ENCODE measurements at regions of chr19 and their contacts with region 1.

Region 1: DNA sequence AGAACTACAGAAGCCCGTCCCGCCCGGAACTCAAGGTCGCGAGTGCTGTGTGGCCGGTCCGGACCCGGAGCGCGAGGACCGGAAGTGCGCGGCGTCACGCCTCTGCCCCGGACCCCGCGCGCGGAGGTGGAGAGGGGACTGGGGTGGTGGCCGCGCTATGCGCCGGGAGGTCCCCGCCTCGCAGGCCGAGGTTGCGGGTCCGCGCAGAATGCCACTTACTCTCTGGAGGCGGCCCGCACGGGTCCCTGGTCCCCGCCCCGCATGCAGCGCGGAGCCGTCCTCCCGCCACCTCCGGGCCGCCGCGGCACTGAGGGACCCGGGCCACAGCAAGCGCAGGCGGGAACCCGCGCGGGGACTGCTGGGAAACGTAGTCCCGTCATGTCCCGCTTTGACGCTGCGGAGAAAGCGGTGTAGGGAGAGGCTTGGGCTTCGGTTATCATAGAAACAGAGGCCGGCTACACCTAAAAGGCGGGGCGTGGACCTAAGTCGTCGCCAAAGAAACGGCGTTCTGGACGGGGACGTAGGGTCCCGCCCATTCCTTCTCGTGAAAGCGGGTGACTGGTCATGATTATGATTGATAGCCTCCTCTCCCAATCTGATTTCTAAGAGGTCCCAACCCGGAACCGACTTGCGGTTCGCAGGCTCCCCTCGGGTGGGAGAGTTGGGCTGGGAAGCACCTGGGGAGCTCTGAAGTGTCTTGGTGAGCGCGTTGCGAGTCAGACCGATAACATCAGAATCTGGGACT is at the start of gene ZNF837:
- DNase-seq: peak; percentile 97 to 100 (median 99)
- H3K4me3 ChIP-seq: peak within 1 kb of the TSS; percentile 61 to 85
- H3K4me3 Mint-ChIP-seq: peak within 1 kb of the TSS; percentile 91 to 97 (median 95)
- H3K27ac ChIP-seq: peak within 1 kb of the TSS; percentile 89
- H3K27ac Mint-ChIP-seq: peak within 1 kb of the TSS; percentile 84 to 98 (median 97)
- H3K4me1 ChIP-seq: peaks cover 26% of the 10 kb centered on the region
- H3K4me1 Mint-ChIP-seq: peaks cover 18 to 42% (median 26%) of the 10 kb centered on the region in 4 donors
- H3K27me3 ChIP-seq: no peaks in the 10 kb centered on the region
- H3K27me3 Mint-ChIP-seq: no peaks in the 10 kb centered on the region
- total RNA-seq, gene ZNF837: 3.4 to 3.5 TPM

Region 2: DNA sequence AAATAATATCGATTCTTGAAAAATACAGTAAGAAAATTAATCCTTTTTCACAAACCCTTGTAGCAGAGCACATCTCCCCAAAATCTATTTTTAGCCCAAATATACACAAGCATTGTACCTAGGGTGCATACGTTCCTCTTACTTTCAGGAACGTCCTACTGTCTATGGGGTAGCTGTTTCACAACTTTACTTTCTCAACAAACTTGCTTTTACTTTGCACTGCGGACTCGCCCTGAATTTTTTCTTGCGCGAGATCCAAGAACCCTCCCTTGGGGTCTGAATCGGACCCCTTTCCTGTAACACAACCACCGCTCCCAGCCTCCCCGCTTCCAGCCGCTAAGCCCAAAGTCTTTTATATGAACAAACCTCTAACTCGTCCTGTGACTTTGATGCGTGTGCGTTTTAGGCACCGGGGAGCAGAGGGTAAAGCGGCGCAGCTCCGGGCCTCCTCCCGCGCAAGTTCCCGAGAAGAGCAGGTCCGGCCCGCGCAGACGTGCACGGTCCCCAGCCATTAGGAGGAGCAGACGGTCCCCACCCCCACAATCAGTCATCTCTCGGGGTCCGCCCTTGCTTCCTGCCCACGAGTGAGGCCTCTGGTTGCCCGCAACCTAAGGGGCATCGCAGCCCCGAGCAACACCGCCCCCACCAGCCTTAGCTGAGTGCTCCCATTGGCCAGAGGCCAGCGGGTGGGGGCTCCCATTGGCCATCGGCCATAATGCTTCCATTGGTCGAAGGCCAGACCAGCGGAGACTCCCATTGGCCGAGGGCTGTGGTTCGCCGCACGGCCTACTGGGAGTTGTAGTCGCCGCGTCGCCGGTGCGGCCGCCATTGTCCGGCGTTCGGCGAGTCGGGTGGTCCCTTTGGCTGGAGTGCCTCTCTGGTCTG is 102.5 kb before region 1 on chr19 and contains the start of gene ZNF8:
- CTCF ChIA-PET with region 1: no interaction called
- POLR2A ChIA-PET with region 1: interaction called, 3 read pairs
- intact Hi-C with region 1: loop called (anchors 2 kb)
- DNase-seq: peak; percentile 93 to 97 (median 95)
- H3K4me3 ChIP-seq: peak within 1 kb of the TSS; percentile 62 to 92
- H3K4me3 Mint-ChIP-seq: peak within 1 kb of the TSS; percentile 93 to 100 (median 98)
- H3K27ac ChIP-seq: peak within 1 kb of the TSS; percentile 73
- H3K27ac Mint-ChIP-seq: peak within 1 kb of the TSS; percentile 91 to 99 (median 96)
- H3K4me1 ChIP-seq: peaks cover 36% of the 10 kb centered on the region
- H3K4me1 Mint-ChIP-seq: peaks cover 28 to 57% (median 36%) of the 10 kb centered on the region in 4 donors
- H3K27me3 ChIP-seq: no peaks in the 10 kb centered on the region
- H3K27me3 Mint-ChIP-seq: no peaks in the 10 kb centered on the region
- total RNA-seq, gene ZNF8: 9.5 to 10.2 TPM

Region 3: DNA sequence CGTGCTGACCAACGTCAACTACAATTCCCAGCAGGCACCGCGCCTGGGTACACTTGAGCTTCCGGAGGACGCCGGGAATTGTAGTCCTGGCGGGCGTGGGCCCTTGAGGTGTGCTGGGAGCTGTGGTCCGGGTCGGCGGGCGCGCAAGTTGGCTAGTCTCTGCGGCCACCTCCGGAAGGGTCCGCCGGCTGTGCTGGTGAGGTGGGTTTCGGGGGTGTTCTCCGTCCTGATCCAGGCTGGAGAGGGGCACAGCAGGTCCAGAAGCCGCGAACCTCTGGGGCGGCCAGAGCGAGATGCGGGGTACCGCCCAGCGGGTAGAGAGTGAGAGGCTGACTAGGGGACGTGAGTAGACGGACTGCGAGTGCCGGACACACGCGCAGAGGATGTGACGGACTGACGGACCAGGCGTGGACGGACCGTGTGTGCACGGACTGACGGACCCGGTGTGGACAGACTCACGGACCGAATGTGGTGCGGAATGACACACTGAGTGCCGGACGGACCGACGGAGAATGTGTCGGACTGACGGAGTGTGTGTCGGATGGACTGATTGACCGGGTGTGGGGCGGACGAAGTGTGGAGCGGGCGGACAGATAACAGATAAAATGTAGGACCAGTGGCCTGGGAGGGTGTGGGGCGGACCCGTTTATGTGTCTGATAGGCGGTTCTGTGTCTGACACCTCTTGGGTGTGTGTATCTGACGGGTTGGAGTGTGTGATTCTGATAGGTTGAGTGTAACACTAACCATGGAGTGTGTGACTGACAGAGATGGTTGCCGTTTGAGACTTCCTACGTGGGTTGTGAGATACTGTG is 53.8 kb before region 1 on chr19 and contains the start of gene ZSCAN22:
- CTCF ChIA-PET with region 1: no interaction called
- POLR2A ChIA-PET with region 1: interaction called, 6 read pairs
- intact Hi-C with region 1: loop called (anchors 1 kb)
- DNase-seq: peak; percentile 80 to 89 (median 83)
- H3K4me3 ChIP-seq: peak within 1 kb of the TSS; percentile 32 to 77
- H3K4me3 Mint-ChIP-seq: no peak within 1 kb of the TSS
- H3K27ac ChIP-seq: peak within 1 kb of the TSS; percentile 80
- H3K27ac Mint-ChIP-seq: no peak within 1 kb of the TSS
- H3K4me1 ChIP-seq: peaks cover 25% of the 10 kb centered on the region
- H3K4me1 Mint-ChIP-seq: peaks cover 0 to 2% (median under 1%) of the 10 kb centered on the region in 4 donors
- H3K27me3 ChIP-seq: no peaks in the 10 kb centered on the region
- H3K27me3 Mint-ChIP-seq: no peaks in the 10 kb centered on the region
- total RNA-seq, gene ZSCAN22: 5.0 to 5.3 TPM

Region 4: GRCh38 chr19:58362272-58362994 is 18.5 kb before region 1 on chr19 and contains the start of gene ZNF497:
- CTCF ChIA-PET with region 1: interaction called, 4 read pairs
- POLR2A ChIA-PET with region 1: interaction called, 44 read pairs
- intact Hi-C with region 1: loop called (anchors 1 kb)
- DNase-seq: peak; percentile 95 to 96 (median 95)
- H3K4me3 ChIP-seq: peak within 1 kb of the TSS; percentile 90 to 98
- H3K4me3 Mint-ChIP-seq: peak within 1 kb of the TSS; percentile 90 to 98 (median 93)
- H3K27ac ChIP-seq: peak within 1 kb of the TSS; percentile 69
- H3K27ac Mint-ChIP-seq: peak within 1 kb of the TSS; percentile 79 to 98 (median 94)
- H3K4me1 ChIP-seq: peaks cover 11% of the 10 kb centered on the region
- H3K4me1 Mint-ChIP-seq: peaks cover 6 to 13% (median 9%) of the 10 kb centered on the region in 4 donors
- H3K27me3 ChIP-seq: no peaks in the 10 kb centered on the region
- H3K27me3 Mint-ChIP-seq: no peaks in the 10 kb centered on the region
- total RNA-seq, gene ZNF497: 1.7 to 2.0 TPM

Region 5: GRCh38 chr19:58408152-58409009 is 27.5 kb after region 1 on chr19 and contains the start of gene ZNF584:
- CTCF ChIA-PET with region 1: no interaction called
- POLR2A ChIA-PET with region 1: interaction called, 7 read pairs
- intact Hi-C with region 1: loop called (anchors 1 kb)
- DNase-seq: peak; percentile 93 to 94 (median 93)
- H3K4me3 ChIP-seq: peak within 1 kb of the TSS; percentile 71 to 94
- H3K4me3 Mint-ChIP-seq: peak within 1 kb of the TSS; percentile 92 to 100 (median 96)
- H3K27ac ChIP-seq: peak within 1 kb of the TSS; percentile 77
- H3K27ac Mint-ChIP-seq: peak within 1 kb of the TSS; percentile 91 to 98 (median 95)
- H3K4me1 ChIP-seq: peaks cover 25% of the 10 kb centered on the region
- H3K4me1 Mint-ChIP-seq: peaks cover 21 to 39% (median 33%) of the 10 kb centered on the region in 4 donors
- H3K27me3 ChIP-seq: no peaks in the 10 kb centered on the region
- H3K27me3 Mint-ChIP-seq: no peaks in the 10 kb centered on the region
- total RNA-seq, gene ZNF584: 10.3 to 10.7 TPM

Region 6: GRCh38 chr19:58451358-58452101 is 70.6 kb after region 1 on chr19 and contains the start of gene ZNF324B:
- CTCF ChIA-PET with region 1: no interaction called
- POLR2A ChIA-PET with region 1: interaction called, 4 read pairs
- intact Hi-C with region 1: loop called (anchors 1 kb)
- DNase-seq: peak; percentile 96 to 97 (median 96)
- H3K4me3 ChIP-seq: peak within 1 kb of the TSS; percentile 60 to 69
- H3K4me3 Mint-ChIP-seq: peak within 1 kb of the TSS; percentile 85 to 93 (median 88)
- H3K27ac ChIP-seq: peak within 1 kb of the TSS; percentile 67
- H3K27ac Mint-ChIP-seq: peak within 1 kb of the TSS; percentile 67 to 93 (median 84)
- H3K4me1 ChIP-seq: peaks cover 7% of the 10 kb centered on the region
- H3K4me1 Mint-ChIP-seq: peaks cover 13 to 31% (median 19%) of the 10 kb centered on the region in 4 donors
- H3K27me3 ChIP-seq: no peaks in the 10 kb centered on the region
- H3K27me3 Mint-ChIP-seq: peaks cover 6 to 11% of the 10 kb centered on the region in 2 donors
- total RNA-seq, gene ZNF324B: 13.1 to 13.7 TPM

Region 7: GRCh38 chr19:58475714-58476497 is 95.0 kb after region 1 on chr19 and contains the start of gene ZNF446:
- CTCF ChIA-PET with region 1: no interaction called
- POLR2A ChIA-PET with region 1: interaction called, 5 read pairs
- intact Hi-C with region 1: loop called (anchors 1 kb)
- DNase-seq: peak; percentile 96 to 99 (median 97)
- H3K4me3 ChIP-seq: peak within 1 kb of the TSS; percentile 69 to 94
- H3K4me3 Mint-ChIP-seq: peak within 1 kb of the TSS; percentile 91 to 98 (median 96)
- H3K27ac ChIP-seq: peak within 1 kb of the TSS; percentile 90
- H3K27ac Mint-ChIP-seq: peak within 1 kb of the TSS; percentile 97 to 100 (median 99)
- H3K4me1 ChIP-seq: peaks cover 17% of the 10 kb centered on the region
- H3K4me1 Mint-ChIP-seq: peaks cover 9 to 33% (median 19%) of the 10 kb centered on the region in 4 donors
- H3K27me3 ChIP-seq: no peaks in the 10 kb centered on the region
- H3K27me3 Mint-ChIP-seq: no peaks in the 10 kb centered on the region
- total RNA-seq, gene ZNF446: 16.4 to 19.5 TPM

Measured in CD4-positive, alpha-beta memory T cell (primary cell).